Right ventricle myocardium inferior (tissue), 1 donor: ENCODE measurements at regions of chr6 and their contacts with region 1.

Region 1: DNA sequence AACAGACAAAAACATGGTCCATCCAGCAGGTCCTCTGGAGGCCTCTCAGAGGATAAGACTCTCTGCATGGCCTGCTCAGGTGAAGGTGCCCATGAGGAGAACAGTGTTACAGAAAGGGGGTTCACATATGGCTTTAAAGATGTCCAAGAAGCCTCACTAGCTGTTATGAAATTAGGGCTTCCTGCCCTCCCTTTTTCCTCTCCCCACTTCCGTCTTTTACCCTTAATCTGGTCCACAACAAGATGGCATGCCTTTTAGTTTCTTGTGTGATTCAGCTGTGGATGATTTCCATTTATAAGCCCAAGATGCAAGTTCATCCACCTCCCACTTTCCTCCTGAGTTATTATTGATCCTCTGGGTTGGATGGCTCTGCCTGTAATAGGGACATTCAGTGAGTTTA is 14.0 kb downstream of the GCNT2 start:
- DNase-seq: no peak
- ATAC-seq: peak; percentile 37

Region 2: DNA sequence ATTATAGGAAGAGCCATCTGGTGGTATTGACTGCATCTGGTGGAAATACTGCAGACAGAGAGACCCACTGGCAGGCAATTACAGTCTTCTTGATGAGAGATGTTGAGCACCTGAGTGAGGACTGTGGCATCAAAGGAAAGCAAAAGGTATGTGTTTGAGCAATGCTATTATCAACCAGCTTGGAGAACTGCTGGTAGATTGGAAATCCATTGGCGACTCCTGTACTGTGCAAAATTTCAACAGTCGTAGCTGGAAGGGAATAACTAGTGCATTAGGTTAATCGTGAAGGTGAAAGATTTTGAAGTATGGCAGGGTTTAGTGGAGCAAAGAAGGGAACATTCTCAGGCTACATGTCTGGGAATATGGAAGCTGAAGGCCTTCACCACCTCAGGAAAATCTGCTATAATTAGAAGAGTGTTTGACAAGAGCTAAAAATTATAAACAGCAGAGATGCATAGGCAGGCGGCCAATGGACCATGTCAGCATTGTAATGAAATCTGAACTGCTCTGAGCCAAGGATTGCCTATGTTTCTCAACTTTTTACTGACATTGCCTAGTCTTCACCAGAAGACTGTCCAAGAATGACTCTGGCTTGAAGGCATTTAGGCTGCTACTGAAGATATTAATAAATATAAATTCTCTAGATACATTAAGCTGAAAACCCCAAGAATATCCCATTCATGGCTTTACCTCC is 74.9 kb after region 1 on chr6:
- intact Hi-C with region 1: loop called (anchors 5 kb)
- DNase-seq: no peak
- ATAC-seq: peak; percentile 86